Endothelial cell of umbilical vein (primary cell): ENCODE measurements at regions of chr2 and their contacts with region 1.

Region 1: DNA sequence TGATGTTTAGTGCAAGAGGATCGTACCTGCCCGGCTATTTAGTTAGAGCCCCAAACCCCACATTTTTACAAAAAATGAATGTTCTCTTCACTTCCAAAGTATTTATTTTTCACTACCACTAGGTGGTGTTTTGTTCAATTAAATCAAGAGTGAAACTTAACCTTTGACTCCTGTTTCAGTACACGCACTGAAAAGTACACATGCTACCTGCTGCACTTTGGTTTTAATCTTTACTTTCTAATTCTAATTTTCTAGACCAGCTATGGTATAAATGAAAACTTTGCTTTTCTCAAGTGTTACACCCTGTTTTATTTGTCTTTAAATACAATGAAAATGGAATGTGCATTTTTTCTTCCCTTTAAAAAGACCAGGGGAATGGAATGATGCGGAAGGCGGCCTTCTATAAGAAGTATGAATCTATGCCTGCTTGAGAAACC is 31.4 kb upstream of the CHN1 start:
- DNase-seq: peak; percentile 42
- H3K4me3 ChIP-seq: no peak overlapping the region
- H3K27ac ChIP-seq: no peak overlapping the region
- H3K4me1 ChIP-seq: no peaks in the 10 kb centered on the region
- H3K27me3 ChIP-seq: no peaks in the 10 kb centered on the region
- CTCF ChIP-seq: peak; percentile 27 to 41
- POLR2A ChIP-seq: no peak

Region 2: GRCh38 chr2:174787487-174788205 is 249.0 kb before region 1 on chr2:
- CTCF ChIA-PET with region 1: no interaction called
- POLR2A ChIA-PET with region 1: no interaction called
- dilution Hi-C with region 1: no loop called
- intact Hi-C with region 1: no loop called
- DNase-seq: peak; percentile 30
- H3K4me3 ChIP-seq: no peak overlapping the region
- H3K27ac ChIP-seq: no peak overlapping the region
- H3K4me1 ChIP-seq: peaks cover 13% of the 10 kb centered on the region
- H3K27me3 ChIP-seq: no peaks in the 10 kb centered on the region
- CTCF ChIP-seq: no peak
- POLR2A ChIP-seq: no peak

Region 3: GRCh38 chr2:175048275-175048674 is 11.7 kb after region 1 on chr2:
- CTCF ChIA-PET with region 1: no interaction called
- POLR2A ChIA-PET with region 1: no interaction called
- dilution Hi-C with region 1: no loop called
- intact Hi-C with region 1: no loop called
- DNase-seq: no peak
- H3K4me3 ChIP-seq: no peak overlapping the region
- H3K27ac ChIP-seq: no peak overlapping the region
- H3K4me1 ChIP-seq: no peaks in the 10 kb centered on the region
- H3K27me3 ChIP-seq: no peaks in the 10 kb centered on the region
- CTCF ChIP-seq: no peak
- POLR2A ChIP-seq: no peak

Region 4: GRCh38 chr2:175111200-175111657 is 74.6 kb after region 1 on chr2:
- CTCF ChIA-PET with region 1: no interaction called
- POLR2A ChIA-PET with region 1: no interaction called
- dilution Hi-C with region 1: no loop called
- intact Hi-C with region 1: loop called (anchors 1 kb)
- DNase-seq: peak; percentile 63
- H3K4me3 ChIP-seq: no peak overlapping the region
- H3K27ac ChIP-seq: no peak overlapping the region
- H3K4me1 ChIP-seq: no peaks in the 10 kb centered on the region
- H3K27me3 ChIP-seq: no peaks in the 10 kb centered on the region
- CTCF ChIP-seq: peak; percentile 24 to 42
- POLR2A ChIP-seq: no peak

Region 5: GRCh38 chr2:175282290-175282689 is 245.7 kb after region 1 on chr2:
- CTCF ChIA-PET with region 1: interaction called, 21 read pairs
- POLR2A ChIA-PET with region 1: no interaction called
- dilution Hi-C with region 1: no loop called
- intact Hi-C with region 1: loop called (anchors 1 kb)
- DNase-seq: peak; percentile 44
- H3K4me3 ChIP-seq: no peak overlapping the region
- H3K27ac ChIP-seq: no peak overlapping the region
- H3K4me1 ChIP-seq: no peaks in the 10 kb centered on the region
- H3K27me3 ChIP-seq: peaks cover 17 to 18% of the 10 kb centered on the region in 2 experiments
- CTCF ChIP-seq: peak; percentile 20 to 26
- POLR2A ChIP-seq: no peak

Region 6: DNA sequence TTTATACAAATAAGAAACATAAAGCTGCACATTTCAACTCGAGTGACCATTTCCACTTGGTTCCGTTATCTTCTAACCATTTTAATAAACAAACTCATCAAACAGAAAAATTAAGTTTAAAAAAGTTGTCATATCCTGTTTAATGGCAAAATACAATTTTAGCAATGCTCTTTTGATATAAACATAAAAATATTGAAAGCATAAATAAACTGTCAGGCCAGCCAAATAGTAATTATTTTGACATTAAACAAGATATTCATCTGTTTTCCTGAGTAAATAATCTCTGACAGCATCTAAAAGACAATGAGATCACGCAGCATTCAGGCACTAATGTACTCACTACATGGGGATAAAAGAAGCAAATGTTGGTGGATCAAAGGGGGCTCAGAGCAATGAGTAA is 290.2 kb after region 1 on chr2:
- CTCF ChIA-PET with region 1: interaction called, 35 read pairs
- POLR2A ChIA-PET with region 1: no interaction called
- dilution Hi-C with region 1: no loop called
- intact Hi-C with region 1: loop called (anchors 2 kb)
- DNase-seq: no peak
- H3K4me3 ChIP-seq: no peak overlapping the region
- H3K27ac ChIP-seq: no peak overlapping the region
- H3K4me1 ChIP-seq: no peaks in the 10 kb centered on the region
- H3K27me3 ChIP-seq: no peaks in the 10 kb centered on the region
- CTCF ChIP-seq: no peak
- POLR2A ChIP-seq: no peak